Activated naive CD4-positive, alpha-beta T cell treated with anti-CD3 and anti-CD28 coated beads for 36 hours (primary cell): ENCODE measurements at regions of chr10 and their contacts with region 1.

Region 1: DNA sequence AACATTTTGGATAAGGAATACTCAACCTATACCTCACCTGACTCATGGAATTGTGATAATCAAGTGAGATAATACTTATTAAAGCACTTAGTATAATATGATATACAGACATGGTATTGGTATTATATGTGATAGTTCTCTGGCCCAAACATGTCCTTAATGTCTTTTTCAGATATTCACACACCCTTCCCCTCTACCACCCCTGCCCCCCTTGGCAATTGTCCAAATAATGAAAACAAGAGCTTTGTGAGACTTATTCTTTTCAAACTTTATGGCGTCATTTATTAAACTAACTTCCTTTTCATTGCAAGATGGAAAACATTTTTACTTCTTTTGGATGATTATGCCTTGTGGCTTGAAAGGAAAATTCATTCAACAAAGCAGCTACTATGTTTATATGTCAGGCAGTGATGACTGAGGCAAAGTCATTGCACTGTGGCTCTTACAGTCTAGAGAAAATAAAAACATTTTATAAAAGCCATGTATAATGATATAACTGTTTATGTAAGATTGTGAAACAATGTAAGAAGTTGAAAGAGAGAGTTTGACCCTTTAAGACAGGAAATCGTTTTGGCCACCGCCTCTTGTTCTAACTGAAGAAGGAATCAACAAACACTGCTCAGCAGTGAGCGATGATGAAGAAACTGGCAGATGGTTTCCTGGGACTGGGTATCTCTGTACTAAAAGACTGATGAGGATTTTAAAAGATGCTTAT is 27.4 kb downstream of the MINPP1 start:
- DNase-seq: no peak
- H3K4me3 Mint-ChIP-seq: no peak overlapping the region
- H3K27ac Mint-ChIP-seq: no peak overlapping the region
- H3K4me1 Mint-ChIP-seq: peaks cover 7% of the 10 kb centered on the region
- H3K27me3 Mint-ChIP-seq: no peaks in the 10 kb centered on the region

Region 2: DNA sequence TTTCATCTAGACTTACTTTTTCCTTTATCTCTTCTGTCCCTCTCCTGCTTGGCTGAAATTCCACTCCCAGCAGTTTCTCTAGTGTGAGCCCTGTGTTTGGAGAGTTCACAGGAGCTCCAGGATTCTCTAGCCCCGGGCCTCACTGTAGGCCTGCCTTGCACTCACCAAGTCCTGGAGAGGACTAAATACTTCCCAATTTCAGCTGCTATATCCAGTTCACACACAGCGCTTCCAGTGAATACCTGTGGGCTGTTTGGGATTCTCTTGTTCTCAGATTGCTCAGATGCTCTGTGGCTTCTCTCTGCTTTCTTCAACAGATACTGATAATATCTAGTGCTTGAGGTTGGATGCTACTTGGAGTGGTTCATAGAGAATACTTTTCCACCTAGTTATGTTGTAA is 18.7 kb after region 1 on chr10:
- CTCF ChIA-PET with region 1: no interaction called
- intact Hi-C with region 1: no loop called
- DNase-seq: no peak
- H3K4me3 Mint-ChIP-seq: no peak overlapping the region
- H3K27ac Mint-ChIP-seq: no peak overlapping the region
- H3K4me1 Mint-ChIP-seq: peaks cover 15% of the 10 kb centered on the region
- H3K27me3 Mint-ChIP-seq: no peaks in the 10 kb centered on the region

Region 3: GRCh38 chr10:87646939-87647338 is 114.9 kb after region 1 on chr10:
- CTCF ChIA-PET with region 1: no interaction called
- intact Hi-C with region 1: loop called (anchors 1 kb)
- DNase-seq: peak; percentile 42
- H3K4me3 Mint-ChIP-seq: no peak overlapping the region
- H3K27ac Mint-ChIP-seq: no peak overlapping the region
- H3K4me1 Mint-ChIP-seq: peaks cover 20% of the 10 kb centered on the region
- H3K27me3 Mint-ChIP-seq: peaks cover 4% of the 10 kb centered on the region

Region 4: GRCh38 chr10:87659571-87660483 is 127.8 kb after region 1 on chr10 and contains the start of gene PAPSS2:
- CTCF ChIA-PET with region 1: interaction called, 3 read pairs
- intact Hi-C with region 1: loop called (anchors 1 kb)
- DNase-seq: peak; percentile 27
- H3K4me3 Mint-ChIP-seq: peak within 1 kb of the TSS; percentile 74
- H3K27ac Mint-ChIP-seq: no peak within 1 kb of the TSS
- H3K4me1 Mint-ChIP-seq: peaks cover 10% of the 10 kb centered on the region
- H3K27me3 Mint-ChIP-seq: peaks cover 48% of the 10 kb centered on the region
- total RNA-seq, gene PAPSS2: 0.38 TPM in 1 of 2 experiments, not detected in the other

Region 5: DNA sequence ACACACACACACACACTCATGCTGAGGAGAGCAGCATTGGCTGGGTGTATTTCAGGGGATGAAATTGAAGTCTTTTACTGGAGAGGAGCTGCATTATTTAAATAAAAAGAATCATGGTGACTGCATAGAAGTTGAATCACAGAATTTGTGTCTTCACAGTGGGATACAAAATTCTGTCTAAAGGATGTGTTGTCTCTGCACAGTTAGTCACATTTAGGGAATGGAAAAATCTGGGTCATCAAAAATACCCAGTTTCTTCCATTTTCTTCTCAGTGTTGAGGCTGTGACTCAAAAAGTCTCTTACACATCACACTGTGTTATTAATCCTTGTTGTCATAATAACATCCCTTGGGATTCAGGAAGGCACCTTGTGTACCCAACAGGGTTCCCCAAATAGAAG is 138.5 kb after region 1 on chr10:
- CTCF ChIA-PET with region 1: no interaction called
- intact Hi-C with region 1: loop called (anchors 2 kb)
- DNase-seq: no peak
- H3K4me3 Mint-ChIP-seq: no peak overlapping the region
- H3K27ac Mint-ChIP-seq: no peak overlapping the region
- H3K4me1 Mint-ChIP-seq: peaks cover 8% of the 10 kb centered on the region
- H3K27me3 Mint-ChIP-seq: peaks cover 8% of the 10 kb centered on the region

Region 6: DNA sequence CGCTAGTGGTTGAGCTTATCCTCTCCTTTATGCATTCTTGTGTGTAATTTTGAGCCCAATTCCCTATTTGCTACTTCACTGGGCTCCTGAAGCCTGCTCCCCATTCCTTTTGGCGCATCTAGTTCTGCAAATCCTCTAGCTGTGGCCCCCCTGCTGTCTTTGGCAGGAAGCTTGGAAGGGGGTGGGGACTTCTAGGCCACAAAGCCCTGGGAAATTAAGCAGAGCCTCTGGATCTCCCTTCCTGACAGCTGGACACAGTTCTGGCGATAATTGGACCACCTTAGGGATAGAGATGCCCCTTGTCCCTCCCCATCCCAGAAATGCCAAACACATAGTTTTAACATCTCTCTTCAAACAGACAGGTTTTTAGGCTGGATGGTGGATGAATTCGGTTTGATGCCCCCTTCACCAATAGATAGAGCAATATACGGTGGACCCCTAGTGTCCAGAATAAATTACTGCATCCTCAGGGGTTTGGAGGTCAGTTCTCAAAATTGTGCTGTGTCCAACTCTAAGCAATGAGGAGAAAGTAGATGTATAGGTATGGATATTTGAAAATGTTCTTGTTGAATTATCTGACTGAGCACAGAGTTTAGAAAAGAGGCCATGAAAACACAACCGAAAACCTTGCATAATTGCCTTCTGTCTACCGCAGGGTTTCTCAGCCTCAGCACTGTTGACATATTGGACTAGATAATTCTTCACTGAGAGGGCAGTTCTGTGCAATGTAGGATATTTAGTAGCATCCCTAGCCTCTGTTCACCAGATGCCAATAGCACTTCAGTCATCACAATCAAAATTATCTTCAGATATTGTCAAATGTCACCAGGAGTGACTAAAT is 203.1 kb after region 1 on chr10:
- CTCF ChIA-PET with region 1: interaction called, 3 read pairs
- intact Hi-C with region 1: loop called (anchors 1 kb)
- DNase-seq: no peak
- H3K4me3 Mint-ChIP-seq: no peak overlapping the region
- H3K27ac Mint-ChIP-seq: no peak overlapping the region
- H3K4me1 Mint-ChIP-seq: no peaks in the 10 kb centered on the region
- H3K27me3 Mint-ChIP-seq: peaks cover 15% of the 10 kb centered on the region

Region 7: DNA sequence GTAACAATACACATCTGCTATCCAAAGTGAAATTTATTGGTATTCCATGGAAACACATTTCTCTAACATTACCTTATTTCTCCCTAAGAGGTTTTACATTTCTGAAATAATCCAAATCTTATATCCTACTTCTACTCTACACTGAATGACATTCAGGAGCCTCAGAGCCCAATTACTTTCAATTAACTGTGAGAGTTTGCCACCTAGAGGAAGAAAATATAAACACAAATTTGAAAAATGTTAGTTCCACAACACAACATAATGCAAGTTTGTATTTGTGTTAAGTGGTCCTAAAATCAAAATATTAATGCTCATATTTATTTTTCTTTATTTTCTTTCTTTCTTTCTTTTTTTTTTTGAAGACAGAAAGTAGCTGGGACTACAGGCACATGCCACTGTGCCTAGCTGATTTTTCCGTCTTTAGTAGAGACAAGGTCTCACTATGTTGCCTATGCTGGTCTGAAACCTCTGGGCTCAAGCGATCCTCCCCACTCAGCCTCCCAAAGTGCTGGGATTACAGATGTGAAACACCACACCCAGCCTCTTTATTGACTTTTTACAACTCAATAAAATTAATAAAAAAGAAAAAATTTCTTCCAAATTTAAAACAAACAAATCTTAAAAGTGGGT is 239.9 kb after region 1 on chr10:
- CTCF ChIA-PET with region 1: interaction called, 3 read pairs
- intact Hi-C with region 1: loop called (anchors 1 kb)
- DNase-seq: no peak
- H3K4me3 Mint-ChIP-seq: no peak overlapping the region
- H3K27ac Mint-ChIP-seq: no peak overlapping the region
- H3K4me1 Mint-ChIP-seq: peaks cover 8% of the 10 kb centered on the region
- H3K27me3 Mint-ChIP-seq: no peaks in the 10 kb centered on the region